Caco-2 (cell line): ENCODE measurements at regions of chr18 and their contacts with region 1.

Region 1: DNA sequence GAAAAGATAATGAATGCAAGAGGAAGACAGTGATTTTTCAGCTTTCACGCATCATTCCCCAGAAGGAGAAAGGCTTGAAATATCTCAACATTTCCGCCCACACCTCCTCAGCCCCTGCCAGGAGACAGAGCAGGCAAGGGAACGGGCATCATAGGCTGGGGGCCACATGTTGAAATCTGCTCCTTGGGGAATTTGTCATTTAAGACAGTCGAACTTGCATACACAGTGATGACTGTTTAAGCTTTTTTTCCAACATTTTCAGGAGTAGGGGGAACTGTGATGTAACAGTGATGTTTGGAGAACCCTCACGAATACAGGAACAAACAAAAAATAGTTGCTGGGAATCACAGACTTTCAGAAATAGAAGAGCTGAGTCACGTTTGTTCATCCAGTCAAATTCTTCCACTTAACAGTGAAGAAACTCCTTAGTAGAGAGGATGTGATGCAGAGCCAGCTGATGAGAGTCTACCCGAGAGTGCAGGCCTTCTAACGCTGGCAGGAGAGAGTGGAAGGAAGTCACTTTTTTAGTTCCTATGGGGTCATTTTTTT is 266.8 kb downstream of the ALPK2 start:
- DNase-seq: no peak
- H3K4me3 ChIP-seq: no peak overlapping the region
- H3K4me3 Mint-ChIP-seq: no peak overlapping the region
- H3K27ac Mint-ChIP-seq: no peak overlapping the region
- H3K4me1 ChIP-seq: no peaks in the 10 kb centered on the region
- H3K4me1 Mint-ChIP-seq: no peaks in the 10 kb centered on the region
- H3K27me3 ChIP-seq: no peaks in the 10 kb centered on the region
- H3K27me3 Mint-ChIP-seq: no peaks in the 10 kb centered on the region
- CTCF ChIP-seq: no peak

Region 2: GRCh38 chr18:57951117-57951796 is 410.8 kb before region 1 on chr18:
- CTCF ChIA-PET with region 1: no interaction called
- POLR2A ChIA-PET with region 1: interaction called, 11 read pairs
- intact Hi-C with region 1: no loop called
- DNase-seq: no peak
- H3K4me3 ChIP-seq: no peak overlapping the region
- H3K4me3 Mint-ChIP-seq: no peak overlapping the region
- H3K27ac Mint-ChIP-seq: no peak overlapping the region
- H3K4me1 ChIP-seq: no peaks in the 10 kb centered on the region
- H3K4me1 Mint-ChIP-seq: peaks cover 10% of the 10 kb centered on the region
- H3K27me3 ChIP-seq: no peaks in the 10 kb centered on the region
- H3K27me3 Mint-ChIP-seq: no peaks in the 10 kb centered on the region
- CTCF ChIP-seq: no peak